CD8-positive, alpha-beta T cell (primary cell): ENCODE measurements at regions of chr5 and their contacts with region 1.

Region 1: GRCh38 chr5:176647030-176647866 is at the start of gene TSPAN17:
- DNase-seq: peak; percentile 93 to 99 (median 99)
- ATAC-seq: peak; percentile 89
- H3K4me3 ChIP-seq: peak within 1 kb of the TSS; percentile 66 to 67
- H3K4me3 Mint-ChIP-seq: peak within 1 kb of the TSS; percentile 89
- H3K27ac ChIP-seq: peak within 1 kb of the TSS; percentile 45 to 72
- H3K27ac Mint-ChIP-seq: peak within 1 kb of the TSS; percentile 90
- H3K4me1 ChIP-seq: peaks cover 50% of the 10 kb centered on the region
- H3K4me1 Mint-ChIP-seq: peaks cover 53% of the 10 kb centered on the region
- H3K27me3 ChIP-seq: no peaks in the 10 kb centered on the region
- H3K27me3 Mint-ChIP-seq: no peaks in the 10 kb centered on the region
- CTCF ChIP-seq: no peak
- total RNA-seq, gene TSPAN17: 9.5 to 9.8 TPM

Region 2: GRCh38 chr5:176388444-176389134 is 258.7 kb before region 1 on chr5 and contains the starts of genes HIGD2A and NOP16:
- CTCF ChIA-PET with region 1: no interaction called
- POLR2A ChIA-PET with region 1: no interaction called
- intact Hi-C with region 1: loop called (anchors 1 kb)
- DNase-seq: peak; percentile 97 to 100 (median 99)
- ATAC-seq: peak; percentile 90
- H3K4me3 ChIP-seq: peak within 1 kb of the TSS; percentile 87 to 89
- H3K4me3 Mint-ChIP-seq: peak within 1 kb of the TSS; percentile 99
- H3K27ac ChIP-seq: peak within 1 kb of the TSS; percentile 90 to 93
- H3K27ac Mint-ChIP-seq: peak within 1 kb of the TSS; percentile 99
- H3K4me1 ChIP-seq: peaks cover 22% of the 10 kb centered on the region
- H3K4me1 Mint-ChIP-seq: peaks cover 36% of the 10 kb centered on the region
- H3K27me3 ChIP-seq: no peaks in the 10 kb centered on the region
- H3K27me3 Mint-ChIP-seq: no peaks in the 10 kb centered on the region
- CTCF ChIP-seq: no peak
- total RNA-seq, gene HIGD2A: 102 to 106 TPM
- total RNA-seq, gene NOP16: 21.6 to 24.2 TPM

Region 3: GRCh38 chr5:176596689-176597416 is 50.4 kb before region 1 on chr5:
- CTCF ChIA-PET with region 1: interaction called, 3 read pairs
- POLR2A ChIA-PET with region 1: no interaction called
- intact Hi-C with region 1: loop called in 1 of 2 experiments (anchors 5 kb)
- DNase-seq: peak; percentile 44 to 84 (median 66)
- ATAC-seq: peak; percentile 81
- H3K4me3 ChIP-seq: peak overlapping the region; percentile 36 to 52
- H3K4me3 Mint-ChIP-seq: peak overlapping the region; percentile 77
- H3K27ac ChIP-seq: no peak overlapping the region
- H3K27ac Mint-ChIP-seq: no peak overlapping the region
- H3K4me1 ChIP-seq: peaks cover 9% of the 10 kb centered on the region
- H3K4me1 Mint-ChIP-seq: peaks cover 7% of the 10 kb centered on the region
- H3K27me3 ChIP-seq: no peaks in the 10 kb centered on the region
- H3K27me3 Mint-ChIP-seq: no peaks in the 10 kb centered on the region
- CTCF ChIP-seq: no peak

Region 4: GRCh38 chr5:176629853-176630712 is 17.2 kb before region 1 on chr5 and contains the starts of genes EIF4E1B and SNCB:
- CTCF ChIA-PET with region 1: interaction called, 4 read pairs
- POLR2A ChIA-PET with region 1: interaction called, 5 read pairs
- intact Hi-C with region 1: loop called in 1 of 2 experiments (anchors 2 kb)
- DNase-seq: peak in 7 of 9 experiments; percentile 31 to 73 (median 60)
- ATAC-seq: peak; percentile 93
- H3K4me3 ChIP-seq: peak within 1 kb of the TSS; percentile 27 to 63
- H3K4me3 Mint-ChIP-seq: peak within 1 kb of the TSS; percentile 67
- H3K27ac ChIP-seq: no peak within 1 kb of the TSS
- H3K27ac Mint-ChIP-seq: no peak within 1 kb of the TSS
- H3K4me1 ChIP-seq: peaks cover 13% of the 10 kb centered on the region
- H3K4me1 Mint-ChIP-seq: peaks cover 12% of the 10 kb centered on the region
- H3K27me3 ChIP-seq: peaks cover 17 to 20% of the 10 kb centered on the region in 2 experiments
- H3K27me3 Mint-ChIP-seq: peaks cover 66% of the 10 kb centered on the region
- CTCF ChIP-seq: peak; percentile 21
- total RNA-seq, gene EIF4E1B: not detected
- total RNA-seq, gene SNCB: not detected

Region 5: GRCh38 chr5:177006265-177006972 is 359.2 kb after region 1 on chr5 and contains the start of gene UIMC1:
- CTCF ChIA-PET with region 1: no interaction called
- POLR2A ChIA-PET with region 1: no interaction called
- intact Hi-C with region 1: loop called in 1 of 2 experiments (anchors 5 kb)
- DNase-seq: peak; percentile 83 to 95 (median 91)
- ATAC-seq: peak; percentile 87
- H3K4me3 ChIP-seq: peak within 1 kb of the TSS; percentile 91 to 99
- H3K4me3 Mint-ChIP-seq: peak within 1 kb of the TSS; percentile 94
- H3K27ac ChIP-seq: peak within 1 kb of the TSS; percentile 70 to 88
- H3K27ac Mint-ChIP-seq: peak within 1 kb of the TSS; percentile 94
- H3K4me1 ChIP-seq: peaks cover 27% of the 10 kb centered on the region
- H3K4me1 Mint-ChIP-seq: peaks cover 27% of the 10 kb centered on the region
- H3K27me3 ChIP-seq: no peaks in the 10 kb centered on the region
- H3K27me3 Mint-ChIP-seq: no peaks in the 10 kb centered on the region
- CTCF ChIP-seq: no peak
- total RNA-seq, gene UIMC1: 48.4 to 52.8 TPM